ENCODE measurements at regions of chr1 and their contacts with region 1.

Region 1: DNA sequence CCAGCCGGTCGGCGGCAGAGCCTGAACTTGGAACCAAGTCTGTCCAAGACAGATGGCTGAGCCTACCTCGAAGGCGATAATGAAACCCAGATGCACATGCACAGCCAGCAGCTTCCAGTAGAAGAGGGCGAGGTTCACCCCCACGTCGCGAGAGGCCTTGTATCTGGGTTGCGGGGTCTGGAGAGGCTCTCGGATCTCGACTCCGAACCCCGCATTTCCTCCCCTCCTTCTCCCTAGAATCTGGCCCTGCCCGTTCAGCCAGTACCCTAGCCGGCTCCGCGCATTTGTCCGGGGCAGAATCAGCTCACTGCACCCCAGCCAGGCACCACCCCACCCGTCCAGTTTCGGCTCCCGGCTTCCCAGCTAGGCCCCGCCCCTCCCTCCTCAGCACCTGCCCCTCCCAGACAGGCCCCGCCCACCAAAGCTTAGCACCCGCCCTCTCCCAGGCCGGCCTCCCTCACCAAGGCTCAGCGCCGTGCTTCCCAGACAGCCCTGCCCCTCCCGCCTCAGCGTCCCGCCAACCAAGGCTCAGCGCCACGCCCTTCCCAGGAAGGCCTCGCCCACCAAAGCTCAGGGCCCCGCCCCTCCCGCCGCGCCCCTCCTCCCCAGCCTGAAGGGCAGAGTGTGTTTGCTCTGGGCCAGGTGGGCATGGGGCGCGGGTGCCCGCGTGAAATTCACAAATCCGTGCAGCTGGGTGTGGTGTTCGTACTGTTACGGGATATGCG is 4.8 kb upstream of the ARHGEF19 start:
- DNase-seq: peak; percentile 66 to 96
- ATAC-seq: peak; percentile 95 to 98
- H3K4me3 ChIP-seq: peak overlapping the region; percentile 46
- H3K27ac ChIP-seq: peak overlapping the region; percentile 70 to 83
- H3K4me1 ChIP-seq: peaks cover 5% of the 10 kb centered on the region; the same call in 2 of the 3 replicates
- CTCF ChIP-seq: no peak
- EP300 ChIP-seq: no peak
- POLR2A ChIP-seq: no peak
- RAD21 ChIP-seq: no peak

Region 2: GRCh38 chr1:16167331-16168143 is 49.7 kb before region 1 on chr1:
- CTCF ChIA-PET with region 1: no interaction called
- POLR2A ChIA-PET with region 1: no interaction called
- DNase-seq: peak in 1 of 2 experiments; percentile 74
- ATAC-seq: peak; percentile 63 to 76
- H3K4me3 ChIP-seq: peak overlapping the region; percentile 60
- H3K27ac ChIP-seq: peak overlapping the region; percentile 97 to 99
- H3K4me1 ChIP-seq: peaks cover 82% of the 10 kb centered on the region
- CTCF ChIP-seq: no peak
- EP300 ChIP-seq: no peak
- POLR2A ChIP-seq: 0 out of 2 replicates have a peak, but pooled peaks have one; percentile 16
- RAD21 ChIP-seq: no peak

Region 3: GRCh38 chr1:16206547-16207317 is 10.5 kb before region 1 on chr1:
- CTCF ChIA-PET with region 1: interaction called, 4 read pairs
- POLR2A ChIA-PET with region 1: interaction called, 29 read pairs
- DNase-seq: peak; percentile 76 to 97
- ATAC-seq: peak; percentile 92 to 95
- H3K4me3 ChIP-seq: peak overlapping the region; percentile 51
- H3K27ac ChIP-seq: peak overlapping the region; percentile 84 to 95
- H3K4me1 ChIP-seq: peaks cover 26% of the 10 kb centered on the region
- CTCF ChIP-seq: no peak
- EP300 ChIP-seq: no peak
- POLR2A ChIP-seq: peak; percentile 85
- RAD21 ChIP-seq: no peak

Region 4: DNA sequence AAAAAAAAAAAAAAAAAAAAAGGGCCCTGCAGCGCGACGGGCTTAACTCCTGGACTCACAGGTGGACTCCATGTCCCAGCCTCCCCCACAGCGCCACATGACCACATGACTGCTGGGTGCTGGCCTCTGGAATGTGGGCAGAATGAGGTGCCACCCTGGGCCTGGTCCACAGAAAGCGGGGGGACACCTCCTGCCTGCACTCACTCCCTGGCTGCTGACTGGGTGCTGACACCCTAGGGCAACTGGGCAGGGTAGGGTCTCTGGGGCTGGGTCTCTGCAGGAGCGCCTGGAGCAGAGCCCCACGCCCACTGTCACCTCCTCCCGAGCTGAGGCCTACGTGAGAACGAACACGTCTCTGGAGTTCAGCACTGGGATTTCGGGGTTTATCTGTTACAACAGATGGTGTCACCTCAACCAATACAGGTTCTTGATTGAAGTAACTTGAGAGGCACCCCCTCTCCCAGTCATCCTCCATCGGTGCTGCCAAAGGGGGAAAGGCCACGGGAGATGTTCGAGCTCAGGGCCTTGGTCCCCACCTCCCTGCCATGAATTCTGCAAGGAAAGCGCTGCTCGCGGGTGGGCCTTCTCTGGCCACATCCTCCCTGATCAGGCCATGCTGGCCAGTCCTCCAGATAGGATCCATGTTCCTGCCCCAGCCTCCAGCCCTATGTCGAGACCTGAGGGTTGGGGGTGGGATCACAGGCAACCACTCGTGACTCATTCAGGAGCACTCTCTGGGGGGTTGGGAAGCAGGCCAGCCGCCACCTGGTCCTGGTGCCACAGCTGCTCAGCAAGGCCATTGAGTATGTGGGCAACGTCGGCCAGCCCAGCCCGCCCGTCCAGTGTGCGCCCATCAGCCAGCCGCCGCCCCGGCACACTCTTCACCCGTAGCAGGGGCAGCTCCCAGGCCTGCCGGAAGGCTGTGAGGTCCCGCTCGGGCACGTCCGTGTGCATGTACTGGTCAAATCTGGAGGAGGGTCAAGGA is 14.4 kb after region 1 on chr1:
- CTCF ChIA-PET with region 1: interaction called, 10 read pairs
- POLR2A ChIA-PET with region 1: interaction called, 3 read pairs
- DNase-seq: no peak
- ATAC-seq: no peak
- H3K4me3 ChIP-seq: no peak overlapping the region
- H3K27ac ChIP-seq: no peak overlapping the region
- H3K4me1 ChIP-seq: peaks cover 6% of the 10 kb centered on the region
- CTCF ChIP-seq: no peak
- EP300 ChIP-seq: no peak
- POLR2A ChIP-seq: no peak
- RAD21 ChIP-seq: no peak

Measured in A549 (cell line).